Calu3 (cell line): ENCODE measurements at regions of chr7 and their contacts with region 1.

Region 1: DNA sequence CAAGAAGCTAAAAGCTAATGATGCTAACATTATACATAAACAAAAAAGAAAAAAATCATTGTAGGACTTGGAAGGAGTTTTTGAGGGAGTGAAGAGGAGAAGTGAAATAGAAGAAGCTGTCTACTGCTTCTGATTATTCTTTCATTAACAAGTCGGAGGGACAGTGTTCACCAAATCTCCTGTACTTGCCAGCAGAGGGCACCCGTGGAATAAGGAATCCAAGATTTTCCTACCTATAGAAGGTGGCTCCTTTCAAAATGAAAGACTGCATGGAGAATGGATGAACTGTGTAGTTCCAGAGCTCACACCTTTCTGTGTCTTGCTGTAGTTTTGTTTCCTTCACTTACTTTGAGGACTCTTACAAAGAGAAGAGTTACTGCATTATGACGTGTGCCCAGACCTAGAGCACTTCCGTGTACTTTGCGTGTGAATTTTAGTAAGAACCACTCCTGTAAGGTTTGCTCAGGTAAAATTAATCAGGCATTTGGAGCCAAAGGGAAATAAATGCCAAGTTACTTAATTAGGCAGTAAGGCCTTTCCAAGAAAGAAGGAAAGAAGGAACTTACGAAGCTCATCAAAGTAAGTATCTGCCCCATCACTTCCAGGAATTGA is 145.1 kb downstream of the SEMA3D start:
- DNase-seq: peak; percentile 69
- H3K4me3 Mint-ChIP-seq: no peak overlapping the region
- H3K27ac Mint-ChIP-seq: no peak overlapping the region
- H3K4me1 Mint-ChIP-seq: no peaks in the 10 kb centered on the region
- H3K27me3 Mint-ChIP-seq: no peaks in the 10 kb centered on the region
- CTCF ChIP-seq: no peak

Region 2: GRCh38 chr7:84331616-84332015 is 710.1 kb before region 1 on chr7:
- CTCF ChIA-PET with region 1: no interaction called
- intact Hi-C with region 1: no loop called
- DNase-seq: no peak
- H3K4me3 Mint-ChIP-seq: no peak overlapping the region
- H3K27ac Mint-ChIP-seq: no peak overlapping the region
- H3K4me1 Mint-ChIP-seq: no peaks in the 10 kb centered on the region
- H3K27me3 Mint-ChIP-seq: no peaks in the 10 kb centered on the region
- CTCF ChIP-seq: no peak

Region 3: GRCh38 chr7:84985073-84985784 is 56.5 kb before region 1 on chr7:
- CTCF ChIA-PET with region 1: no interaction called
- intact Hi-C with region 1: no loop called
- DNase-seq: no peak
- H3K4me3 Mint-ChIP-seq: no peak overlapping the region
- H3K27ac Mint-ChIP-seq: no peak overlapping the region
- H3K4me1 Mint-ChIP-seq: no peaks in the 10 kb centered on the region
- H3K27me3 Mint-ChIP-seq: no peaks in the 10 kb centered on the region
- CTCF ChIP-seq: no peak

Region 4: DNA sequence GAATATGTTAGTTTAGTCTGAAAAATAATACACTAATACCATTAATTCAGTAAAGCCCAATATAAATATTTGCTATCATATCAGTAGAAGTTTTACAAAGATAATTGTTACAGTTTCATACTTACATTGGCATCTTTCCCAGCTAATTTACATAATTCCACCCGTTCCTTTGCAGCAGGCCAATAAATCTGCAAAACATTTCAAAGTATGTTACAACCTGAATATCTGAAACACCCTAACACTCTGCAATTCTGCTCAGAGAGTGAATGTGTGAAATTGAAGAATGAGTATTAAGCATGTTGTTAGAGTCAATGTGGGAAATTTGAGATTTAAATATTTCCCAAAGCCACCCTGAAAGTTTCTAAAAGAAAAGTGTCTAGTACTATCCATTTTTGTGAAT is 39.7 kb after region 1 on chr7:
- CTCF ChIA-PET with region 1: no interaction called
- intact Hi-C with region 1: no loop called
- DNase-seq: no peak
- H3K4me3 Mint-ChIP-seq: no peak overlapping the region
- H3K27ac Mint-ChIP-seq: no peak overlapping the region
- H3K4me1 Mint-ChIP-seq: no peaks in the 10 kb centered on the region
- H3K27me3 Mint-ChIP-seq: no peaks in the 10 kb centered on the region
- CTCF ChIP-seq: no peak

Region 5: GRCh38 chr7:85186521-85187241 is 145.0 kb after region 1 on chr7 and contains the start of gene SEMA3D:
- CTCF ChIA-PET with region 1: interaction called, 11 read pairs
- intact Hi-C with region 1: loop called (anchors 1 kb)
- DNase-seq: peak; percentile 84
- H3K4me3 Mint-ChIP-seq: peak within 1 kb of the TSS; percentile 96
- H3K27ac Mint-ChIP-seq: peak within 1 kb of the TSS; percentile 22
- H3K4me1 Mint-ChIP-seq: no peaks in the 10 kb centered on the region
- H3K27me3 Mint-ChIP-seq: no peaks in the 10 kb centered on the region
- CTCF ChIP-seq: peak; percentile 77
- total RNA-seq, gene SEMA3D: 0.91 and 2.0 TPM in 2 replicates

Region 6: GRCh38 chr7:85469446-85470010 is 427.8 kb after region 1 on chr7:
- CTCF ChIA-PET with region 1: interaction called, 10 read pairs
- intact Hi-C with region 1: loop called (anchors 5 kb)
- DNase-seq: no peak
- H3K4me3 Mint-ChIP-seq: no peak overlapping the region
- H3K27ac Mint-ChIP-seq: no peak overlapping the region
- H3K4me1 Mint-ChIP-seq: peaks cover 5% of the 10 kb centered on the region
- H3K27me3 Mint-ChIP-seq: no peaks in the 10 kb centered on the region
- CTCF ChIP-seq: no peak

Region 7: DNA sequence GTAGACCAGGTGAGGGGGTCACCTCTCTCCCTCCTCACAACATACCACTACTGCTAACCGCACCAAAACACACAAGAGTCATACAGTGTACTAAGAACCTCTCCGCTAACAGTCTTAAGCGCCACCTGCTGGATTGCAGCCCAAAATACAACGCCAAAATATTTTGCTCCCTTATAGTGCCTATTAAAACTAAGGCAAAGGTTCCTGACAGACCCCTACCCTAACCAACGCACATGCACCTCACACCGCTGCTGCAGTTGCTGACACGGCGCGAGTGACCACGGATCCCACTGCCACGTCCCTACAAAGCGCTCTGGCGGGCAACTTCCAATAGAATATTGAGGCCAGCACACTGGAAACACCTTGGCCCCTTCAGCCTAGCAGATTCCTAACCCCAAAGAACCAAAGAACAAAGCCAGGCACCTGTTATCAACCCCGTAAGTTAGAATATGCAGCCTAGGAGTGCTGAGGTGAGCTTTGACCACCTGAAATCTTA is 708.8 kb after region 1 on chr7:
- CTCF ChIA-PET with region 1: no interaction called
- intact Hi-C with region 1: loop called (anchors 2 kb)
- DNase-seq: peak; percentile 34
- H3K4me3 Mint-ChIP-seq: no peak overlapping the region
- H3K27ac Mint-ChIP-seq: no peak overlapping the region
- H3K4me1 Mint-ChIP-seq: peaks cover 10% of the 10 kb centered on the region
- H3K27me3 Mint-ChIP-seq: no peaks in the 10 kb centered on the region
- CTCF ChIP-seq: peak; percentile 56

Region 8: GRCh38 chr7:85851571-85852193 is 810.0 kb after region 1 on chr7:
- CTCF ChIA-PET with region 1: no interaction called
- intact Hi-C with region 1: loop called (anchors 2 kb)
- DNase-seq: no peak
- H3K4me3 Mint-ChIP-seq: no peak overlapping the region
- H3K27ac Mint-ChIP-seq: no peak overlapping the region
- H3K4me1 Mint-ChIP-seq: no peaks in the 10 kb centered on the region
- H3K27me3 Mint-ChIP-seq: no peaks in the 10 kb centered on the region
- CTCF ChIP-seq: peak; percentile 14